GM12878 (cell line): ENCODE measurements at regions of chr7 and their contacts with region 1.

Region 1: GRCh38 chr7:82481499-82482097 is 38.0 kb upstream of the CACNA2D1 start:
- DNase-seq: peak; percentile 0
- ATAC-seq: peak; percentile 86
- H3K4me3 ChIP-seq: no peak overlapping the region
- H3K27ac ChIP-seq: no peak overlapping the region
- H3K4me1 ChIP-seq: no peaks in the 10 kb centered on the region
- H3K27me3 ChIP-seq: no peaks in the 10 kb centered on the region
- CTCF ChIP-seq: peak; percentile 56 to 62 (median 56)
- EP300 ChIP-seq: no peak
- POLR2A ChIP-seq: no peak
- RAD21 ChIP-seq: peak; percentile 56

Region 2: DNA sequence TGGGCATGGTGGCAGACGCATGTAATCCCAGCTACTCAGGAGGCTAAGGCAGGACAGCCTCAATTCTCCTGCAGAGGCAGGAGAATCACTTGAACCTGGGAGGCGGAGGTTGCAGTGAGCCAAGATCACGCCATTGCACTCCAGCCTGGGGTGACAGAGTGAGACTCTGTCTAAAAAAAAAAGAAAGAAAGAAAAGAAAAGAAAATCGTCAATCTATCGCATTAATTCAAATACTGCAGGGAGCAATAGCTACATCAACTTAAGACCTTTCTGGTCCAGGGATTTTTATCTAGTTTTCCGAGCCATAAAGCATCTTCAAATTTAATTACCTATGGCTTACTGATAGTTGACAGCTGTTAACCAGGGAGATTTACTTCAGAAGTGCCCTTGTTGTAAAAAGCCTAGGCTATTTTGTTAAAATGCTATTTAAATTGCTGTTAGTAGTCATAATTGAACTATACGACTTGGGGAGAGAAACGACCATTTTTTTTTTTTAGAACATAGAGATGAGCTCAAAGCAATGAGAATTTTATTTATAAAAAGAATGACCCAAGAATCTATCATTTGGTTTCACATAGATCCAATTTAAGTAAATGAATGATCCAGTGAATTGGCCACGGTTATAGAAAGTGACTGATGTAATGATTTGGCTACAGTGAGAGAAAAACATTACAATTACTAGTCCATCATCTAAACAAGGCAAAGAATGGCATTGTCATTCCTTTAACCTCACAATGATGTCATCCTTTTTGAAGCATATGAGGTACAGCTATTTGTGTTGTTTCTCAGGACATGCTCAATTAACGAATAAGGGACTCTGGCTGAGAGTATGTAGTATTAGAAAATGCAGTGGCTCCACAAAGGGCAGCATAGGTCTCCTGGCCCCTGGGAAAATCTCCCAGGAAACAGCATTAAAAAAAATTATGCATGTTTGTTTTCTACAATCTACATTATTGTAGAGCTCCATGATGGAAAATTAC is 1648.0 kb before region 1 on chr7:
- CTCF ChIA-PET with region 1: no interaction called
- POLR2A ChIA-PET with region 1: no interaction called
- RAD21 ChIA-PET with region 1: no interaction called
- SMC1A ChIA-PET with region 1: no interaction called
- in situ Hi-C with region 1: no loop called
- intact Hi-C with region 1: no loop called
- DNase-seq: no peak
- ATAC-seq: no peak
- H3K4me3 ChIP-seq: no peak overlapping the region
- H3K27ac ChIP-seq: no peak overlapping the region
- H3K4me1 ChIP-seq: no peaks in the 10 kb centered on the region
- H3K27me3 ChIP-seq: no peaks in the 10 kb centered on the region
- CTCF ChIP-seq: no peak
- EP300 ChIP-seq: no peak
- POLR2A ChIP-seq: no peak
- RAD21 ChIP-seq: no peak

Region 3: GRCh38 chr7:82234457-82235049 is 247.0 kb before region 1 on chr7:
- CTCF ChIA-PET with region 1: interaction called, 26 read pairs
- POLR2A ChIA-PET with region 1: no interaction called
- RAD21 ChIA-PET with region 1: interaction called, 14 read pairs
- SMC1A ChIA-PET with region 1: interaction called, 79 read pairs
- in situ Hi-C with region 1: no loop called
- intact Hi-C with region 1: loop called (anchors 1 kb)
- DNase-seq: no peak
- ATAC-seq: peak; percentile 60
- H3K4me3 ChIP-seq: no peak overlapping the region
- H3K27ac ChIP-seq: no peak overlapping the region
- H3K4me1 ChIP-seq: no peaks in the 10 kb centered on the region
- H3K27me3 ChIP-seq: no peaks in the 10 kb centered on the region
- CTCF ChIP-seq: peak; percentile 34 to 51 (median 49); a peak in 5 of 6 replicates
- EP300 ChIP-seq: no peak
- POLR2A ChIP-seq: no peak
- RAD21 ChIP-seq: peak; percentile 69

Region 4: DNA sequence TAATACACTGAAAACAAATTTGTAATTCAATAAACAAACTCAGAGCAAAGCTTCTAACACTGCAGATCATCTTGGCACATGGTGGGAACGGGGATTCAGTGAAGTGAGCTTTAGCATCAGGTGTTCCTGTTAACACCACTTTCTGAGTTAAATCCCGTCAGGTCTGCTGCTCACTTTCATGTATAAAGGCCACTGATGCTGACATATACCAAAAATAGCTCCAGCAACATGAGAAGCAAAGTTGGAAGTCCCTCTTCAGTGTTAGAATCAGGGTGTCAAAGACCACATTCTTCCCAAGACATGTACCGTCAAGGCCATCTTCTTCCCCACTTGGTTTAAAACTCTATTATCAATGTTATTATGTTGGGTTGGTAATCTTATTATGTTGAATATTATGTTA is 26.3 kb before region 1 on chr7:
- CTCF ChIA-PET with region 1: interaction called, 10 read pairs
- POLR2A ChIA-PET with region 1: no interaction called
- RAD21 ChIA-PET with region 1: interaction called, 9 read pairs
- SMC1A ChIA-PET with region 1: interaction called, 7 read pairs
- in situ Hi-C with region 1: no loop called
- intact Hi-C with region 1: no loop called
- DNase-seq: no peak
- ATAC-seq: no peak
- H3K4me3 ChIP-seq: no peak overlapping the region
- H3K27ac ChIP-seq: no peak overlapping the region
- H3K4me1 ChIP-seq: no peaks in the 10 kb centered on the region
- H3K27me3 ChIP-seq: no peaks in the 10 kb centered on the region
- CTCF ChIP-seq: no peak
- EP300 ChIP-seq: no peak
- POLR2A ChIP-seq: no peak
- RAD21 ChIP-seq: no peak

Region 5: DNA sequence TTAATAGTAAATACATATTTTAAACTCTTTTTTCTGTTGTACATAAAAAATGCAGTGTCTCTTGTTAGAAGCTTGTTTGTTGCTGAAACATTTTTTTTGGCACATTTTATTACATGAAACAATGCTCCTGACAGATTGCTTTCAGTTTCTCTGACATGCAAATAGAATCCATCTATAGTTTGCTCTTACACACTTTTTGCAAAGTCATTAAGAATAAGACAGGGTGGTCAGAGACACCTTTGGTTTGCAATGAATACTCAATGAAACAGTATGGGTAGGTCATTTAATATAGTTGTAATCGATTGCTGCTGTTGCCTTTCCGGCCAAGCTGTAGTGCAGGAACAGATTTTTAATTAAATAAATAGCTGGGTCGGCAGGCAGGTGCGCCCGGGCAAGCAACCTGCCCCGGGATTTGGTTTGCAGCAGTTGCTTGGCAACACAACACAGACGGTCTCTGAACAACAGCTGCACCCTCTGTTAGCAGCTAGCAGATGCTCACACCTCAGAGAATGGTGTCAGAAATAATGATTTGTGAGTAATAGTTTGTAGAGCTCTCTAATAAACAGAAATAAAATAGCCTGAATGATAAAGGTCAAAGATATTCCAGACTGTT is 77.7 kb after region 1 on chr7:
- CTCF ChIA-PET with region 1: interaction called, 12 read pairs
- POLR2A ChIA-PET with region 1: no interaction called
- RAD21 ChIA-PET with region 1: interaction called, 10 read pairs
- SMC1A ChIA-PET with region 1: interaction called, 6 read pairs
- in situ Hi-C with region 1: no loop called
- intact Hi-C with region 1: no loop called
- DNase-seq: no peak
- ATAC-seq: peak; percentile 97
- H3K4me3 ChIP-seq: no peak overlapping the region
- H3K27ac ChIP-seq: no peak overlapping the region
- H3K4me1 ChIP-seq: no peaks in the 10 kb centered on the region
- H3K27me3 ChIP-seq: no peaks in the 10 kb centered on the region
- CTCF ChIP-seq: no peak
- EP300 ChIP-seq: peak in 1 of 2 experiments; percentile 69; a peak in 2 of 4 replicates
- POLR2A ChIP-seq: no peak
- RAD21 ChIP-seq: no peak

Region 6: DNA sequence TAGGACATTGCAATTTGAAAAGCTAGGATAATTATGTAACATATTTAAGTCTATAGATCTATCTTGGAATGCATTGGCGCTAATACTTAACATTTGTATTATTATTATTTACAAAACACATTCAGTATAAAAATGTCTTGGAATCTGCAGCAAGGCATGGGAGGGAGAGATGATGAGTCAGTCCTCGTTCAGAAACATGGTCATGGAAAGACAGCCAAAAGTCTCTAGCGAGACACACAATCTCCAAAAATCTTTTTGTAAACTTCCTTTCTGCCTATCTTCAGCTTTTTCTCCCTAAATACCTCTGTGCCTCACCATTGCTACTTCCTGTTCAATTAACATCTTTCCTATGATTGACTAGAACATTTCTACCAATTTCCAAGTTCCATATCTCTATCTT is 150.4 kb after region 1 on chr7:
- CTCF ChIA-PET with region 1: no interaction called
- POLR2A ChIA-PET with region 1: no interaction called
- RAD21 ChIA-PET with region 1: no interaction called
- SMC1A ChIA-PET with region 1: no interaction called
- in situ Hi-C with region 1: no loop called
- intact Hi-C with region 1: no loop called
- DNase-seq: no peak
- ATAC-seq: no peak
- H3K4me3 ChIP-seq: no peak overlapping the region
- H3K27ac ChIP-seq: no peak overlapping the region
- H3K4me1 ChIP-seq: no peaks in the 10 kb centered on the region
- H3K27me3 ChIP-seq: no peaks in the 10 kb centered on the region
- CTCF ChIP-seq: no peak
- EP300 ChIP-seq: no peak
- POLR2A ChIP-seq: no peak
- RAD21 ChIP-seq: no peak

Region 7: GRCh38 chr7:82762880-82763279 is 281.3 kb after region 1 on chr7:
- CTCF ChIA-PET with region 1: no interaction called
- POLR2A ChIA-PET with region 1: no interaction called
- RAD21 ChIA-PET with region 1: no interaction called
- SMC1A ChIA-PET with region 1: no interaction called
- in situ Hi-C with region 1: no loop called
- intact Hi-C with region 1: no loop called
- DNase-seq: no peak
- ATAC-seq: no peak
- H3K4me3 ChIP-seq: no peak overlapping the region
- H3K27ac ChIP-seq: no peak overlapping the region
- H3K4me1 ChIP-seq: no peaks in the 10 kb centered on the region
- H3K27me3 ChIP-seq: no peaks in the 10 kb centered on the region
- CTCF ChIP-seq: no peak
- EP300 ChIP-seq: no peak
- POLR2A ChIP-seq: no peak
- RAD21 ChIP-seq: no peak

Region 8: DNA sequence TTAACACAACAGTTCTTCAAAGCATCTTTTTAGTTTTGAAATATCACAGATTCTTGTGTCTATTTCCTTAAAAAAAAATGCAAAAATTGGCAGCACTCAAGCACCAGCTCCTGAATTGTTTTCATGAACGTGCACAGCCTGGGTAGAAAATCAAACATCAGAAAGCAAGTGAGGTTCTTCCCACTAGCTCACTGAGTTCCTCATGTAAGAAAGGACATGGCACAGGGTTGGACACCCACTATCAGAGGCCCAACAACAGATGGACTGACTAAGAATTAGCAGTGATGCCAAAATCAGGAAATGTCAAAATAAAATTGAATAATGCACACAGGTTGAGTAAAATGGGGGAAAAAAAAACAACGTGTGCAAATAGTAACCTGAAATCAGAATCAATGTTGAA is 534.3 kb after region 1 on chr7:
- CTCF ChIA-PET with region 1: no interaction called
- POLR2A ChIA-PET with region 1: no interaction called
- RAD21 ChIA-PET with region 1: no interaction called
- SMC1A ChIA-PET with region 1: no interaction called
- in situ Hi-C with region 1: no loop called
- intact Hi-C with region 1: no loop called
- DNase-seq: no peak
- ATAC-seq: no peak
- H3K4me3 ChIP-seq: no peak overlapping the region
- H3K27ac ChIP-seq: no peak overlapping the region
- H3K4me1 ChIP-seq: no peaks in the 10 kb centered on the region
- H3K27me3 ChIP-seq: no peaks in the 10 kb centered on the region
- CTCF ChIP-seq: no peak
- EP300 ChIP-seq: no peak
- POLR2A ChIP-seq: no peak
- RAD21 ChIP-seq: no peak